Brain microvascular endothelial cell (primary cell): ENCODE measurements at regions of chr16 and their contacts with region 1.

Region 1: GRCh38 chr16:57413301-57413730 is 8.7 kb downstream of the CCL17 start:
- DNase-seq: no peak
- H3K4me3 ChIP-seq: no peak overlapping the region
- H3K27ac ChIP-seq: no peak overlapping the region
- H3K27me3 ChIP-seq: no peaks in the 10 kb centered on the region
- CTCF ChIP-seq: no peak

Region 2: DNA sequence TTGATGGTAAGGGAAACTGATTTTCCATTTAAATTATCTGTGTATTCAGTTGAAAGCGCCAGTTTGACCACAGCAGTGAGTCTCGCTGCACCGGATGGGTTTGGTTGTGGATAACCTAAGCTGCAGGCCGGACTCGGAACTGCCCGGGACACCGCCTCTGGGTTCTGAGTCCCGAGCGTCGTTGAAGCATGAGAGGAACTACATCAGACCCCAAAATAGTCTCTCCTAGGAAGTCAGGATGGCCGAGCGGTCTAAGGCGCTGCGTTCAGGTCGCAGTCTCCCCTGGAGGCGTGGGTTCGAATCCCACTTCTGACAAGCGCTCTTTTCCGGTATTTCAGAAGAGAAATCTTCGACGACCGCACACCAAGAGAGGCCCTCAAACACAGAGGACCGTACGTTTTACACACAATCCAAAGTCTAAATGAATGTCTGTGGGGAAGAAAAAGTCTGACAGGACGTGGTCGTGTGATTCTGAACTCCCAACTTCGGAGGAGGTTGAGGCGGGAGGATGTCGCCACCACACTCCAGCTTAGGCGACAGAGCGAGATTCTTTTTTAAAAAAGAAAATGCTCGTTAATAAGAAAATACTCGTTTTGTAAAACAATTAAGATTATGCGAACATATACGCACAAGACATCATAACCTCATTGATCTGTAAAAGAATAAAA is 113.5 kb before region 1 on chr16:
- in situ Hi-C with region 1: loop called (anchors 10 kb)
- DNase-seq: peak; percentile 92
- H3K4me3 ChIP-seq: peak overlapping the region; percentile 61
- H3K27ac ChIP-seq: peak overlapping the region; percentile 51
- H3K27me3 ChIP-seq: no peaks in the 10 kb centered on the region
- CTCF ChIP-seq: peak; percentile 0